ENCODE measurements at regions of chr10 and their contacts with region 1.

Region 1: DNA sequence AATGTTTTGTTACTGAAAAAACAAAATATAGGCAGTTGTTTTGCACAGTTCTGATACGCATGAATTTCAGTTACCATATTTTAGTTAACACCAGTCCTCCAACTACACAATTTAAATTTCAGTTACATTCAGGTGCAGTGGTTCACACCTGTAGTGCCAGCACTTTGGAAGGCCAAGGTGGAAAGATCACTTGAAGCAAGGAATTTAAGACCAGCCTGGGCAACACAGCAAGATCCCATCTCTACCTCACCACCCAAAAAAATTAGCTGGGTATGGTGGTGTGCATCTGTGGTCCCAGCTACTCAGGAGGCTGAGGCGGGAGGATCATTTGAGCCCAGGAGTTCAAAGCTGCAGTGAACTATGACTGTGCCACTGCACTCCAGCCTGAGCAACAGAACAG is 45.3 kb downstream of the ABI1 start:
- DNase-seq: no peak
- ATAC-seq: no peak
- H3K4me3 ChIP-seq: no peak overlapping the region
- H3K27ac ChIP-seq: no peak overlapping the region
- H3K4me1 ChIP-seq: no peaks in the 10 kb centered on the region
- H3K27me3 ChIP-seq: no peaks in the 10 kb centered on the region
- CTCF ChIP-seq: no peak

Region 2: GRCh38 chr10:26776258-26776657 is 39.2 kb before region 1 on chr10:
- CTCF ChIA-PET with region 1: no interaction called
- POLR2A ChIA-PET with region 1: interaction called, 15 read pairs
- in situ Hi-C with region 1: no loop called
- intact Hi-C with region 1: no loop called
- DNase-seq: no peak
- ATAC-seq: no peak
- H3K4me3 ChIP-seq: no peak overlapping the region
- H3K27ac ChIP-seq: no peak overlapping the region
- H3K4me1 ChIP-seq: peaks cover 5% of the 10 kb centered on the region
- H3K27me3 ChIP-seq: no peaks in the 10 kb centered on the region
- CTCF ChIP-seq: no peak

Region 3: DNA sequence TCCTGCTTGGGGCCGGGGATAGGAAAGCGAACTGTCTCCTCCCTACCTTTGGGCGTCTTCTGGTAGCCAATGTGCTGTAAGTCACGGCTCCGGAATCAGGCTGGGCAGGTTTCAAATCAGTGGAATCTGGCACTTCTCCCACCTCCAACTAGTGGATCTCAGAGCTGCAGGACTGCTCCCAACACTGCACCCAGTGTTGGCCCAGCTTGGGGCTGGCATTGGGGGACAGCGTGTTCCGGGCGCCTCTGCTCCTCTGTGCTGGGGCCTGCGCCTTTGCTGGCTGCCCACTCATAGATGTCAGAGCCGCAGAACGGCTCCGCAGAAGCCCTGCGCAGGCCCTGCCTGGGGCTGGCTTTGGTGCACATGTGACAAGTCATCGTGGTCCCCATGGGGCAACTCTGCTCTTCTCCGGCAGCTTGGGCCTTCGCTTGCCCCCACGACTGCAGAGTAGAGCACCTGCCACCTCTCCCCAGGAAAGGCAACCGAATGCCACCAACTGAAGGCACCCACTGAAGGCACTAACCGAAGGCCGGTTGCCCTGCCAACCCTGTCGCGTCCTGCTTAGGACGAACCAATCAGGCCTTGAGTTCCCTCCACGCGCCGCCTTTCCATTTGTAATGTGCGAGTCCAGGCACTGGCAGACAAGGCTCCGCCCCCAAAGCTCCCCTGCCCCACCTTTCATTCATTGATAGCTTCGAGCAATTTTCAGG is 130.8 kb after region 1 on chr10:
- CTCF ChIA-PET with region 1: no interaction called
- POLR2A ChIA-PET with region 1: no interaction called
- in situ Hi-C with region 1: no loop called
- intact Hi-C with region 1: no loop called
- DNase-seq: no peak
- ATAC-seq: no peak
- H3K4me3 ChIP-seq: no peak overlapping the region
- H3K27ac ChIP-seq: no peak overlapping the region
- H3K4me1 ChIP-seq: no peaks in the 10 kb centered on the region
- H3K27me3 ChIP-seq: no peaks in the 10 kb centered on the region
- CTCF ChIP-seq: no peak

Region 4: DNA sequence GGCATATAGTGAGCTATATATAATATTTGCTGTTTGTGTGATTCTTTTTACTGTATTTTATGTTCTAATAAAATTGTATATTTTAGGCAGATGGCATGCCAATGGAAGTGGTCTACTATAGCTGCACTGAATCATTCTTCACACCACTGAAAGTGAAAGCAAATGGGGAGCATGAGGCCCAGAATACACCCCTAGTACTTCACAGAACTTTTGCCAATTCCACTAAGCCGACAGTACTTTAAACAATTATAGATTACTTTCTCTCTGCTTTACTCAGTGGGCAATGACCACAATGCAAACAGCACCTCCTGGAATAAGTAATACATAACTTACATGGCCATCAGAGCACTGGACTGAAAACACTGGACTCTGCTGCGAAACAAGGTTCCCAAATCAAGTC is 214.6 kb after region 1 on chr10:
- CTCF ChIA-PET with region 1: no interaction called
- POLR2A ChIA-PET with region 1: no interaction called
- in situ Hi-C with region 1: no loop called
- intact Hi-C with region 1: no loop called
- DNase-seq: no peak
- ATAC-seq: no peak
- H3K4me3 ChIP-seq: no peak overlapping the region
- H3K27ac ChIP-seq: no peak overlapping the region
- H3K4me1 ChIP-seq: no peaks in the 10 kb centered on the region
- H3K27me3 ChIP-seq: no peaks in the 10 kb centered on the region
- CTCF ChIP-seq: no peak